ENCODE measurements at regions of chr20 and their contacts with region 1.

Region 1: DNA sequence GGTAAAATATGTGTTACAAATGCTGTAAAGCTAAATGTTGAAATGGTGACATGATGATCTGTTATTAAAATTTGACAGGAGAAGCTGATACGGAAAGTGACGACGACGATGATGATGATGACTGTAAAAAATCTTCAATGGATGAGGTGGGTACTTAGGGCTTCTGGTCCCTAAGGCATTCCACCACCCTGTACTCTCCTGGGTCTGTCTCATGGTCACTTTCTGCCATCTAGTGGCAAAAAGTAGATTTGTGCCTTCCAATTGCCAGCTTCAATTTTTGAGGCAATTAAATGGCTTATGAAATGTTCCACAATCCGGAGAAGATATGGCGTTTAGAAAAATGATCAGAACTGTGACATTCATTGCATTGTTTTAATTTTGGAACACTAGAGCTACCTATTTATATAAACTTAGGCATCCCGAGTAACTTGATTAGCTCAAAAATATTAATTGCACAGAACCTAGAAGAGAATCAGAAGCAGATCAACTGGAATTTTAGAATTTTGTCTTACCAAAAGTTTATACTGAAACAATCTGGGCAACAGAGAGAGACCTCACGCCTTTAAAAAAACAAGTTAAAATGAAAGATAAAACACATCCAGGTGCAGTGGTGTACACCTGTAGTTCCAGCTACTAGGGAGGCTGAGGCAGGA is 346.5 kb upstream of the PLCB4 start:
- DNase-seq: peak; percentile 88
- ATAC-seq: peak; percentile 95
- H3K4me3 ChIP-seq: no peak overlapping the region
- H3K27ac ChIP-seq: no peak overlapping the region
- H3K4me1 ChIP-seq: no peaks in the 10 kb centered on the region
- H3K27me3 ChIP-seq: peaks cover 18% of the 10 kb centered on the region; the same call in 1 of the 2 replicates
- CTCF ChIP-seq: peak; percentile 93

Region 2: DNA sequence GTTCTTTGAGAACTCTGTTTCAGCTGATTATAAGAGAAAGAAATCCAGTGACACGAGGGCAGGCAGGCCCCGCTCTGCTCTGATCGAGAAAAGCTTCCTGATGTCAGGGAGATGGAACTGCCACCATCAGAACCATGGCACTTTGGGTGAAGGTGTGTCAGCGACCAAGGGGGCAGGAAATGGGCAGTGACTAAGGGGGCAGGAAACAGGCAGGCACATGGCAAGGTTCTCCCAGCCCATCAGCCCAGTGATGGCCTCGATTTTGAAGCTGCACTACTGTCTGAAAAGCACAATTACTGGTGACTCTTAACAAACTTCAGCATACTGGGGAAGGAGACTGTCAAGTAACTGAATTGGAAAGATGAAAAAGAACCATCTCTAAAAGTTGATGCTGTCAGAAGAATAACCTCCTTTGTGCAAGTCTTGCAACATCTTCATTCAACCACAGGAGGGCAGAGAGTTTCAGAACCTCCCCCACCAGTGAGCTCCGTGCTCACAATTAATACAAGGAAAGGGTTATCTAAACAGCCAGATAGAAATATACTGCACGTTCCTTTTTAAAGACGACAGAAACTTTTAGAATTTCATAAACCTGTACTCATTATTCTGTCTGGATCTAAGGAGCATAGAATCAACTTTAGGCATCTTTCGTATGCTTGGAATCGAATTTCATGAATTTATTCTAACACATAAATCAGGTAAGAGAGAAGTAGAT is 741.9 kb before region 1 on chr20:
- CTCF ChIA-PET with region 1: interaction called, 8 read pairs
- POLR2A ChIA-PET with region 1: no interaction called
- intact Hi-C with region 1: loop called (anchors 1 kb)
- DNase-seq: peak; percentile 62
- ATAC-seq: peak; percentile 82
- H3K4me3 ChIP-seq: no peak overlapping the region
- H3K27ac ChIP-seq: no peak overlapping the region
- H3K4me1 ChIP-seq: peaks cover 7% of the 10 kb centered on the region
- H3K27me3 ChIP-seq: no peaks in the 10 kb centered on the region
- CTCF ChIP-seq: peak; percentile 83

Region 3: GRCh38 chr20:8131598-8132483 is 590.6 kb before region 1 on chr20 and contains the start of gene PLCB1:
- CTCF ChIA-PET with region 1: interaction called, 3 read pairs
- POLR2A ChIA-PET with region 1: no interaction called
- intact Hi-C with region 1: loop called (anchors 1 kb)
- DNase-seq: peak; percentile 72
- ATAC-seq: peak; percentile 92
- H3K4me3 ChIP-seq: peak within 1 kb of the TSS; percentile 56
- H3K27ac ChIP-seq: no peak within 1 kb of the TSS
- H3K4me1 ChIP-seq: peaks cover 7% of the 10 kb centered on the region; the same call in 1 of the 2 replicates
- H3K27me3 ChIP-seq: peaks cover 79% of the 10 kb centered on the region
- CTCF ChIP-seq: peak; percentile 74
- total RNA-seq, gene PLCB1: 4.4 TPM in 2 replicates

Region 4: DNA sequence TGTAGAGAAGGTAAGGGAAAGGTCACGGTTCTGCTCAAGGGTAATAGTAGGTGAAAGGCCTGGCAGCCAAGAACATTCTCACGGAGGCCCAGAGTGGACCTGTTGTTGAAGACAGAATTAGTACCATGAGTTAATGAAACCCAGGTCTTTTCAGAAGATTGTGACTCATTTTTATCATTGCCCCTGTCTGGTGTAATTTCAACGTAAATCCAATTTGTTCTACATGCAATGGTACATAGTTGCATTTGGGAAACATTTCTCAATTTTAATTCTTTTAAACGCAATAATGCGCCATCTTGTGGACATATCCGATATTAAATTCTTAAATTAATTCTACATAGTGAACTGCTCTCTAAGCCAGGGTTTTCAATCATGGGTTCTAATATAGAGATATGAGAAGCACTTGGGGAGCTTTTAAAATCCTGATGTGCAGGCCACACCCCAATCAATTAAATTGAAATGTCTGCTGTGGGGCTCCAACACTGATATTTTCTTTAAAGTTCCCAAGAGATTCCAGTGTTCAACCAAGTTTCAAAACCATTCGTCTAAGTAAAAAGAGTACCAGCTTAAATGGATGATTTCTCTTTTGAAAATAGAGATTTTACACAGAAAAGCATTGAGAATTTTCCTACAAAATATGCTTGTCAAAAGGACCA is 332.9 kb before region 1 on chr20:
- CTCF ChIA-PET with region 1: no interaction called
- POLR2A ChIA-PET with region 1: no interaction called
- intact Hi-C with region 1: loop called (anchors 1 kb)
- DNase-seq: peak; percentile 72
- ATAC-seq: peak; percentile 29; the same call in 1 of the 2 replicates
- H3K4me3 ChIP-seq: no peak overlapping the region
- H3K27ac ChIP-seq: no peak overlapping the region
- H3K4me1 ChIP-seq: no peaks in the 10 kb centered on the region
- H3K27me3 ChIP-seq: no peaks in the 10 kb centered on the region
- CTCF ChIP-seq: peak; percentile 74

Region 5: GRCh38 chr20:8756410-8756809 is 34.0 kb after region 1 on chr20:
- CTCF ChIA-PET with region 1: interaction called, 12 read pairs
- POLR2A ChIA-PET with region 1: no interaction called
- intact Hi-C with region 1: no loop called
- DNase-seq: peak; percentile 77
- ATAC-seq: peak; percentile 94
- H3K4me3 ChIP-seq: no peak overlapping the region
- H3K27ac ChIP-seq: no peak overlapping the region
- H3K4me1 ChIP-seq: no peaks in the 10 kb centered on the region; the same call in 1 of the 2 replicates
- H3K27me3 ChIP-seq: no peaks in the 10 kb centered on the region
- CTCF ChIP-seq: no peak

Region 6: GRCh38 chr20:8790442-8791074 is 68.2 kb after region 1 on chr20:
- CTCF ChIA-PET with region 1: no interaction called
- POLR2A ChIA-PET with region 1: no interaction called
- intact Hi-C with region 1: no loop called
- DNase-seq: peak; percentile 81
- ATAC-seq: peak; percentile 70
- H3K4me3 ChIP-seq: no peak overlapping the region
- H3K27ac ChIP-seq: no peak overlapping the region
- H3K4me1 ChIP-seq: no peaks in the 10 kb centered on the region
- H3K27me3 ChIP-seq: no peaks in the 10 kb centered on the region
- CTCF ChIP-seq: peak; percentile 98

Region 7: GRCh38 chr20:8867181-8867740 is 144.9 kb after region 1 on chr20:
- CTCF ChIA-PET with region 1: no interaction called
- POLR2A ChIA-PET with region 1: no interaction called
- intact Hi-C with region 1: no loop called
- DNase-seq: no peak
- ATAC-seq: no peak
- H3K4me3 ChIP-seq: no peak overlapping the region
- H3K27ac ChIP-seq: no peak overlapping the region
- H3K4me1 ChIP-seq: no peaks in the 10 kb centered on the region
- H3K27me3 ChIP-seq: no peaks in the 10 kb centered on the region
- CTCF ChIP-seq: no peak